H1 (cell line): ENCODE measurements at regions of chr5 and their contacts with region 1.

Region 1: DNA sequence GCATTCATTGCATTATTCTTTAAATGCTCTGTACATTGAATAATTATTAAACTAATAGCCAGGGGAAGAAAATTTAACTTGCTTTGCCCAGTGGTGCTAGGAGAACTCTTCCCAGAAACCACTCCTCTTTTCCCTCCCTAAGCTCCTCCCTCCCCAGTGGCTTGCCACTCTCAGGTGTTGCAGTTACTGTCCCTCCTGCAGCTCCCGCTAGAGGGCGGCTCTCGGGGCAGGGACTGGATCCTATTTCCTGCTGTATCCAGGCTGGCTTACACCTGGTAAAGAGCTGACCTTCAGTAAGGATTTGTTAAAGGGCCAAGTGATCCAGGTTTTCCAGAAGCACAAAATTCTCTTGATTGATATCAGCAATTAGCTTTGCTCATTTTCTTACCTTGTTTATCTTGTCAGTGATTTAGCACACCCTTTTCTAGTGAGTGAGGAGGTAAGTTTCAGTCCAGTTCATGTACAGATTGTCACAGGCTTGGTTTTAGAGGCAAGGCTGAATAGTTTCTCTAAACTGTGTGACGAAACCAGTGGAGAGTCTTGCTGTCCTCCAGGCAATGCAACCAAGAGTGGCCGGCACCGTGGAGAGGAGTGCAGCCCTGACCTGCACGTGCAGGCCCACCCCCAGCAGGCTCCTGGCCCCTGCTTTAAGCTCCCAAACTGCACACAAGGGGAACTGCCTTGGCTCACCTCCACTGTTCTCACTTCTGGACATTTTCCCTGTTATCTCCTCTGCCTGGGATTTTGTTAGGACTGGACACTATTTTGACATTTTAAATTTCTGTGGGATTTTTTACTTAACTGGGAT is 423.8 kb downstream of the SPOCK1 start:
- DNase-seq: peak; percentile 73 to 87
- H3K4me3 ChIP-seq: no peak overlapping the region
- H3K27ac ChIP-seq: no peak overlapping the region; the same call in 1 of the 2 replicates
- H3K4me1 ChIP-seq: peaks cover 0 to 8% (median 6%) of the 10 kb centered on the region in 4 experiments; a peak in 6 of 7 replicates
- H3K27me3 ChIP-seq: no peaks in the 10 kb centered on the region
- CTCF ChIP-seq: peak; percentile 89 to 95 (median 93)
- EP300 ChIP-seq: no peak
- POLR2A ChIP-seq: no peak
- RAD21 ChIP-seq: peak; percentile 82 to 84

Region 2: GRCh38 chr5:137016783-137017338 is 58.5 kb before region 1 on chr5:
- CTCF ChIA-PET with region 1: no interaction called
- POLR2A ChIA-PET with region 1: no interaction called
- DNase-seq: no peak
- H3K4me3 ChIP-seq: no peak overlapping the region
- H3K27ac ChIP-seq: no peak overlapping the region
- H3K4me1 ChIP-seq: no peaks in the 10 kb centered on the region
- H3K27me3 ChIP-seq: no peaks in the 10 kb centered on the region
- CTCF ChIP-seq: peak in 2 of 3 experiments; percentile 13 to 40; a peak in 1 of 4 replicates
- EP300 ChIP-seq: no peak
- POLR2A ChIP-seq: no peak
- RAD21 ChIP-seq: peak; percentile 19 to 29; a peak in 3 of 4 replicates

Region 3: GRCh38 chr5:137051165-137051564 is 24.2 kb before region 1 on chr5:
- CTCF ChIA-PET with region 1: interaction called, 15 read pairs
- POLR2A ChIA-PET with region 1: no interaction called
- DNase-seq: no peak
- H3K4me3 ChIP-seq: no peak overlapping the region
- H3K27ac ChIP-seq: no peak overlapping the region
- H3K4me1 ChIP-seq: no peaks in the 10 kb centered on the region
- H3K27me3 ChIP-seq: no peaks in the 10 kb centered on the region
- CTCF ChIP-seq: peak in 2 of 3 experiments; percentile 49 to 74; a peak in 2 of 4 replicates
- EP300 ChIP-seq: no peak
- POLR2A ChIP-seq: no peak
- RAD21 ChIP-seq: peak; percentile 87 to 93

Region 4: GRCh38 chr5:137086342-137086741 is 11.0 kb after region 1 on chr5:
- CTCF ChIA-PET with region 1: interaction called, 53 read pairs
- POLR2A ChIA-PET with region 1: interaction called, 3 read pairs
- DNase-seq: no peak
- H3K4me3 ChIP-seq: no peak overlapping the region
- H3K27ac ChIP-seq: no peak overlapping the region
- H3K4me1 ChIP-seq: peaks cover 4 to 12% (median 10%) of the 10 kb centered on the region in 4 experiments
- H3K27me3 ChIP-seq: no peaks in the 10 kb centered on the region
- CTCF ChIP-seq: peak in 1 of 3 experiments; percentile 29; a peak in 1 of 4 replicates
- EP300 ChIP-seq: no peak
- POLR2A ChIP-seq: no peak
- RAD21 ChIP-seq: peak in 1 of 2 experiments; percentile 24; a peak in 1 of 4 replicates

Region 5: GRCh38 chr5:137091472-137091871 is 16.1 kb after region 1 on chr5:
- CTCF ChIA-PET with region 1: interaction called, 53 read pairs
- POLR2A ChIA-PET with region 1: no interaction called
- DNase-seq: no peak
- H3K4me3 ChIP-seq: no peak overlapping the region
- H3K27ac ChIP-seq: no peak overlapping the region
- H3K4me1 ChIP-seq: peaks cover 7 to 14% (median 11%) of the 10 kb centered on the region in 4 experiments
- H3K27me3 ChIP-seq: no peaks in the 10 kb centered on the region
- CTCF ChIP-seq: no peak
- EP300 ChIP-seq: no peak
- POLR2A ChIP-seq: no peak
- RAD21 ChIP-seq: no peak

Region 6: DNA sequence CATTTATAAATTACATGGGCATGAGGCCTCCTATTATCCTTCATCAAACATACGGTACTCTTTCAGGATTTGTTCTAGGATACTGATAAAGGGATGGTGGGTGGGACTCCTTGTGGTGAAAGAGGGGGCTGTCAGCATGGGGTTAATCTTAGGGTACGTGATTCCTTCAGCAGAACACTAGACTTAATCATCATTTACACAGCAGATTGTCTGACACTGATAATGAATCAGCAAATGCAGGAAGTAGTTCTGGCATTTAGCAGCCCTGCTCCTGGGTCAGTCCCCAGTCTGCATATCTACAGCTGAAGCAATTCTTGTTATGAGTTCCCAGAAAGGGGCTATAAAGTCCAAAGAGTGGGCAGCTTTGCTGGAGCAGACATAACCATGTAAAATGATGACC is 39.2 kb after region 1 on chr5:
- CTCF ChIA-PET with region 1: interaction called, 14 read pairs
- POLR2A ChIA-PET with region 1: no interaction called
- DNase-seq: no peak
- H3K4me3 ChIP-seq: no peak overlapping the region
- H3K27ac ChIP-seq: no peak overlapping the region
- H3K4me1 ChIP-seq: no peaks in the 10 kb centered on the region
- H3K27me3 ChIP-seq: no peaks in the 10 kb centered on the region
- CTCF ChIP-seq: no peak
- EP300 ChIP-seq: no peak
- POLR2A ChIP-seq: no peak
- RAD21 ChIP-seq: no peak